ENCODE measurements at regions of chr11 and their contacts with region 1.

Region 1: GRCh38 chr11:108135845-108136544 is 14.6 kb downstream of the ACAT1 start:
- DNase-seq: no peak
- ATAC-seq: no peak
- H3K4me3 ChIP-seq: no peak overlapping the region
- H3K27ac ChIP-seq: no peak overlapping the region
- H3K4me1 ChIP-seq: 0 out of 2 replicates have a peak, but pooled peaks cover 3% of the 10 kb centered on the region
- H3K27me3 ChIP-seq: no peaks in the 10 kb centered on the region
- CTCF ChIP-seq: no peak

Region 2: GRCh38 chr11:107561688-107562087 is 574.3 kb before region 1 on chr11:
- CTCF ChIA-PET with region 1: no interaction called
- POLR2A ChIA-PET with region 1: no interaction called
- in situ Hi-C with region 1: no loop called
- intact Hi-C with region 1: no loop called
- DNase-seq: peak; percentile 92
- ATAC-seq: peak; percentile 77
- H3K4me3 ChIP-seq: no peak overlapping the region
- H3K27ac ChIP-seq: peak overlapping the region; percentile 70; the same call in 1 of the 2 replicates
- H3K4me1 ChIP-seq: peaks cover 37% of the 10 kb centered on the region
- H3K27me3 ChIP-seq: no peaks in the 10 kb centered on the region
- CTCF ChIP-seq: no peak

Region 3: GRCh38 chr11:107849790-107850189 is 286.2 kb before region 1 on chr11:
- CTCF ChIA-PET with region 1: no interaction called
- POLR2A ChIA-PET with region 1: no interaction called
- in situ Hi-C with region 1: no loop called
- intact Hi-C with region 1: no loop called
- DNase-seq: no peak
- ATAC-seq: peak; percentile 68
- H3K4me3 ChIP-seq: no peak overlapping the region
- H3K27ac ChIP-seq: peak overlapping the region; percentile 61
- H3K4me1 ChIP-seq: peaks cover 44% of the 10 kb centered on the region
- H3K27me3 ChIP-seq: no peaks in the 10 kb centered on the region
- CTCF ChIP-seq: no peak

Region 4: DNA sequence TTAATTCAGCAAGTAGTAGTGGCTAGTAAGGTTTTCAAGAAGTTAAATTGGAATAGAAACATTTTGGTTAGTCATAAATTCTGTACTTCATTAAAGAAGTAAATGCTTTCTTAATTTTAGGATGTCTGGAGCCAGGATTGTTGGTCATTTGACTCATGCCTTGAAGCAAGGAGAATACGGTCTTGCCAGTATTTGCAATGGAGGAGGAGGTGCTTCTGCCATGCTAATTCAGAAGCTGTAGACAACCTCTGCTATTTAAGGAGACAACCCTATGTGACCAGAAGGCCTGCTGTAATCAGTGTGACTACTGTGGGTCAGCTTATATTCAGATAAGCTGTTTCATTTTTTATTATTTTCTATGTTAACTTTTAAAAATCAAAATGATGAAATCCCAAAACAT is 11.2 kb after region 1 on chr11:
- CTCF ChIA-PET with region 1: interaction called, 11 read pairs
- POLR2A ChIA-PET with region 1: no interaction called
- in situ Hi-C with region 1: no loop called
- intact Hi-C with region 1: no loop called
- DNase-seq: no peak
- ATAC-seq: no peak
- H3K4me3 ChIP-seq: no peak overlapping the region
- H3K27ac ChIP-seq: no peak overlapping the region
- H3K4me1 ChIP-seq: no peaks in the 10 kb centered on the region
- H3K27me3 ChIP-seq: no peaks in the 10 kb centered on the region
- CTCF ChIP-seq: no peak

Measured in Panc1 (cell line).